ENCODE measurements at regions of chr2 and their contacts with region 1.

Region 1: DNA sequence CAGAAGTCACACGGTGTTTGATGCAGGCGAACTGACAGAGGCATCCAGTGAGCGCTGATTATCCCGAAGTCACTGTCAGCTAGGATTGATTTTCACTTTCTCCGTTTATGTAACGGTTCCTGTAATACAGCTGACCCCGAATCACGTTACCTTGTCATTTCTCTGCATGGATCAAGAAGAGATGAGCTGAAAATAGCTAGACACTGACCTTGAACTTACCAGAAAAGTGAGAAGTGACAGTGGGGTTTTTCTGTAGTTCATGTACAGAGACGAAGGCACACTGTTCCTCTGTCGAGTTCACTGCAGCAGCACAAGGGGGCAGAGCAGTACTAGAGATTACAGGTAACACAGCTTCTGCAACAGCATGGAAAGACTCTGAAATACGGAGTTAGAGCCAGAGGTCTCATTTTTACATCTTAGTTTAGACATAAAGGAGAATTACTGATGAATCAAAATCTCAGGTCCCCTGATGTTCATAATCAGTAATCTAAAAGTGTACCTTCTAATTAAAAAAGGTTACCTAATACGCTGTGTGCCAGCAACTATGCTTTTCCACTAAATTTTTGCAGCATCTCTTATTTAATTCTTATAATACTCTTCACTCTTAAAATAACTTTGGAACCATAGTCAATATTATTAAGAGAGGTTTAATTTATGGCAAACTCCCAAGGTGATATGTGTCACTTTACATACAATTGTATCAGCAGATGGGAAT is 33.1 kb downstream of the ARHGAP15 start:
- DNase-seq: peak; percentile 22 to 85 (median 62)
- ATAC-seq: peak; percentile 99
- H3K4me3 ChIP-seq: no peak overlapping the region
- H3K4me3 Mint-ChIP-seq: no peak overlapping the region
- H3K27ac ChIP-seq: no peak overlapping the region
- H3K27ac Mint-ChIP-seq: peak overlapping the region; percentile 87
- H3K4me1 ChIP-seq: peaks cover 64% of the 10 kb centered on the region
- H3K4me1 Mint-ChIP-seq: peaks cover 88% of the 10 kb centered on the region
- H3K27me3 ChIP-seq: no peaks in the 10 kb centered on the region
- H3K27me3 Mint-ChIP-seq: no peaks in the 10 kb centered on the region
- CTCF ChIP-seq: peak; percentile 77

Region 2: DNA sequence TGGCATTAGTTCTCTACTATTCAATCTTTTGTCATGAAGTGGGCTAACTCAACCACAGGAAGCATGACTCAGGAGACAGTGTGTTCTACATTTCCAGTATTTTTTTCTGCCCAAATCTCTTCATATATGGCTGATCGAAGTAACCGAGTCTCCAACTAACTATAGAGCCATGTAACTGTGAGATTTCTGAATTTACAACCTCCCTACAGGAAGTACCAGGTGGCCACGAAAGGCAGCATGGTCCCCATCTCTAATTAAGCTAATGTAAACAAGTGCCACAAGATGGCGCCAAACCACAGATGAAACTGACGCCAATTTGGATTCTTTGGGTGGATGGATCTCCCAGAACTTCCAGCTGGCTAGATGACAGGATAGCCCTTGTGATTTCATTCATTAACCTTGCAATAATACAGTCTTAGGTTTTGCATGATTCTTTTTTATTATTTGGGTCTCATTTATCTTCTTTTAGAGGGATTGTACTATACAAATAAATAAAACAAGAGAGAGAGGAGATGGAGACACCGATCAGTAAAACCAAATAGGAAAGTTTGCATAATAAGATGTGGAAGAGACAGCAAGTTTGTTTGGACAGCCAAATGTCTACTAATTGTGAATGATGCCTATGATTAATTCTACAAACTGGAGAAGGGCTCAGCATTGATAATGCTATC is 51.4 kb before region 1 on chr2:
- CTCF ChIA-PET with region 1: interaction called, 74 read pairs
- POLR2A ChIA-PET with region 1: interaction called, 5 read pairs
- intact Hi-C with region 1: loop called (anchors 1 kb)
- DNase-seq: peak; percentile 16 to 87 (median 66)
- ATAC-seq: peak; percentile 88
- H3K4me3 ChIP-seq: no peak overlapping the region
- H3K4me3 Mint-ChIP-seq: no peak overlapping the region
- H3K27ac ChIP-seq: no peak overlapping the region
- H3K27ac Mint-ChIP-seq: peak overlapping the region; percentile 74
- H3K4me1 ChIP-seq: peaks cover 15% of the 10 kb centered on the region
- H3K4me1 Mint-ChIP-seq: peaks cover 24% of the 10 kb centered on the region
- H3K27me3 ChIP-seq: no peaks in the 10 kb centered on the region
- H3K27me3 Mint-ChIP-seq: no peaks in the 10 kb centered on the region
- CTCF ChIP-seq: peak; percentile 85

Region 3: DNA sequence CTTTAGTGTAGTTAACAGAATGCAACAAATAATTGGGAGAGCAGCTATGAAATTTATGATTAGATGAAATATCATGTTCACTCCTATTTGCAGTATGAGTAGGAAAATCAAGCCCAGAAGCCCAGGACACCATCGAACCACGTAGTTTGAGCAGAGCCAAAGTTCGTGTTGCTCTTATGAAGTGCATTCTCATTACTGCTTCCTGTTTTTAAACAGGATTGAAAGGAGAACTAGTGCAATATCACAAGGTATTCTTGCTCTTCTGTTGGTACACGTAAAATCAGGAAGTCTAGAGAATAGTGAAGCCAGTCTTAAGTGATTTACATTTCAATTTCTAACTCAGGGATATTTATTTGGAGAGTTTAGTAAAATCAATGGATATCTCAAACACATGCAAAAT is 12.0 kb before region 1 on chr2:
- CTCF ChIA-PET with region 1: interaction called, 18 read pairs
- POLR2A ChIA-PET with region 1: interaction called, 6 read pairs
- intact Hi-C with region 1: no loop called
- DNase-seq: peak in 1 of 9 experiments; percentile 43
- ATAC-seq: peak; percentile 47
- H3K4me3 ChIP-seq: no peak overlapping the region
- H3K4me3 Mint-ChIP-seq: peak overlapping the region; percentile 53
- H3K27ac ChIP-seq: peak overlapping the region; percentile 2 to 38
- H3K27ac Mint-ChIP-seq: peak overlapping the region; percentile 85
- H3K4me1 ChIP-seq: peaks cover 90% of the 10 kb centered on the region
- H3K4me1 Mint-ChIP-seq: peaks cover 87% of the 10 kb centered on the region
- H3K27me3 ChIP-seq: no peaks in the 10 kb centered on the region
- H3K27me3 Mint-ChIP-seq: no peaks in the 10 kb centered on the region
- CTCF ChIP-seq: no peak

Region 4: GRCh38 chr2:143205106-143205764 is 43.0 kb after region 1 on chr2:
- CTCF ChIA-PET with region 1: interaction called, 5 read pairs
- POLR2A ChIA-PET with region 1: no interaction called
- intact Hi-C with region 1: loop called (anchors 1 to 5 kb)
- DNase-seq: peak in 2 of 9 experiments; percentile 52 to 71
- ATAC-seq: peak; percentile 77
- H3K4me3 ChIP-seq: no peak overlapping the region
- H3K4me3 Mint-ChIP-seq: no peak overlapping the region
- H3K27ac ChIP-seq: peak overlapping the region in 1 of 2 experiments; percentile 53
- H3K27ac Mint-ChIP-seq: peak overlapping the region; percentile 69
- H3K4me1 ChIP-seq: peaks cover 21% of the 10 kb centered on the region
- H3K4me1 Mint-ChIP-seq: peaks cover 66% of the 10 kb centered on the region
- H3K27me3 ChIP-seq: no peaks in the 10 kb centered on the region
- H3K27me3 Mint-ChIP-seq: no peaks in the 10 kb centered on the region
- CTCF ChIP-seq: peak; percentile 52

Region 5: GRCh38 chr2:143252138-143252907 is 90.0 kb after region 1 on chr2:
- CTCF ChIA-PET with region 1: interaction called, 137 read pairs
- POLR2A ChIA-PET with region 1: no interaction called
- intact Hi-C with region 1: no loop called
- DNase-seq: peak in 1 of 9 experiments; percentile 23
- ATAC-seq: peak; percentile 14
- H3K4me3 ChIP-seq: no peak overlapping the region
- H3K4me3 Mint-ChIP-seq: peak overlapping the region; percentile 59
- H3K27ac ChIP-seq: peak overlapping the region in 1 of 2 experiments; percentile 53
- H3K27ac Mint-ChIP-seq: peak overlapping the region; percentile 88
- H3K4me1 ChIP-seq: peaks cover 43% of the 10 kb centered on the region
- H3K4me1 Mint-ChIP-seq: peaks cover 66% of the 10 kb centered on the region
- H3K27me3 ChIP-seq: no peaks in the 10 kb centered on the region
- H3K27me3 Mint-ChIP-seq: no peaks in the 10 kb centered on the region
- CTCF ChIP-seq: no peak

Region 6: GRCh38 chr2:143463719-143464118 is 301.4 kb after region 1 on chr2:
- CTCF ChIA-PET with region 1: no interaction called
- POLR2A ChIA-PET with region 1: no interaction called
- intact Hi-C with region 1: loop called in 1 of 2 experiments (anchors 5 kb)
- DNase-seq: no peak
- ATAC-seq: no peak
- H3K4me3 ChIP-seq: no peak overlapping the region
- H3K4me3 Mint-ChIP-seq: no peak overlapping the region
- H3K27ac ChIP-seq: no peak overlapping the region
- H3K27ac Mint-ChIP-seq: no peak overlapping the region
- H3K4me1 ChIP-seq: no peaks in the 10 kb centered on the region
- H3K4me1 Mint-ChIP-seq: peaks cover 20% of the 10 kb centered on the region
- H3K27me3 ChIP-seq: no peaks in the 10 kb centered on the region
- H3K27me3 Mint-ChIP-seq: no peaks in the 10 kb centered on the region
- CTCF ChIP-seq: no peak